PC-9 (cell line): ENCODE measurements at regions of chr1 and their contacts with region 1.

Region 1: GRCh38 chr1:46401964-46402626 is 8.0 kb downstream of the FAAH start:
- DNase-seq: peak; percentile 67 to 88
- H3K4me3 ChIP-seq: no peak overlapping the region
- H3K27ac ChIP-seq: no peak overlapping the region
- H3K4me1 ChIP-seq: peaks cover 8% of the 10 kb centered on the region; the same call in 1 of the 2 replicates
- H3K27me3 ChIP-seq: no peaks in the 10 kb centered on the region
- CTCF ChIP-seq: no peak

Region 2: GRCh38 chr1:46370214-46370633 is 31.9 kb before region 1 on chr1:
- CTCF ChIA-PET with region 1: interaction called, 15 read pairs
- POLR2A ChIA-PET with region 1: no interaction called
- intact Hi-C with region 1: no loop called
- DNase-seq: no peak
- H3K4me3 ChIP-seq: no peak overlapping the region
- H3K27ac ChIP-seq: no peak overlapping the region
- H3K4me1 ChIP-seq: no peaks in the 10 kb centered on the region
- H3K27me3 ChIP-seq: no peaks in the 10 kb centered on the region
- CTCF ChIP-seq: no peak

Region 3: GRCh38 chr1:46456411-46456963 is 54.4 kb after region 1 on chr1:
- CTCF ChIA-PET with region 1: no interaction called
- POLR2A ChIA-PET with region 1: no interaction called
- intact Hi-C with region 1: no loop called
- DNase-seq: no peak
- H3K4me3 ChIP-seq: no peak overlapping the region
- H3K27ac ChIP-seq: no peak overlapping the region
- H3K4me1 ChIP-seq: no peaks in the 10 kb centered on the region
- H3K27me3 ChIP-seq: peaks cover 41% of the 10 kb centered on the region
- CTCF ChIP-seq: no peak

Region 4: GRCh38 chr1:46477153-46477929 is 75.2 kb after region 1 on chr1:
- CTCF ChIA-PET with region 1: no interaction called
- POLR2A ChIA-PET with region 1: interaction called, 4 read pairs
- intact Hi-C with region 1: loop called (anchors 5 kb)
- DNase-seq: peak; percentile 46 to 82
- H3K4me3 ChIP-seq: no peak overlapping the region
- H3K27ac ChIP-seq: no peak overlapping the region
- H3K4me1 ChIP-seq: peaks cover 9% of the 10 kb centered on the region; the same call in 1 of the 2 replicates
- H3K27me3 ChIP-seq: 0 out of 2 replicates have a peak, but pooled peaks cover 5% of the 10 kb centered on the region
- CTCF ChIP-seq: peak; percentile 96

Region 5: GRCh38 chr1:46554597-46555381 is 152.7 kb after region 1 on chr1:
- CTCF ChIA-PET with region 1: no interaction called
- POLR2A ChIA-PET with region 1: interaction called, 24 read pairs
- intact Hi-C with region 1: no loop called
- DNase-seq: peak in 1 of 2 experiments; percentile 4
- H3K4me3 ChIP-seq: no peak overlapping the region
- H3K27ac ChIP-seq: no peak overlapping the region
- H3K4me1 ChIP-seq: 0 out of 2 replicates have a peak, but pooled peaks cover 9% of the 10 kb centered on the region
- H3K27me3 ChIP-seq: peaks cover 13% of the 10 kb centered on the region; the same call in 1 of the 2 replicates
- CTCF ChIP-seq: no peak

Region 6: GRCh38 chr1:46718727-46719622 is 316.9 kb after region 1 on chr1 and contains the start of gene EFCAB14:
- CTCF ChIA-PET with region 1: no interaction called
- POLR2A ChIA-PET with region 1: no interaction called
- intact Hi-C with region 1: loop called (anchors 10 kb)
- DNase-seq: peak; percentile 91 to 100
- H3K4me3 ChIP-seq: peak within 1 kb of the TSS; percentile 82
- H3K27ac ChIP-seq: peak within 1 kb of the TSS; percentile 88
- H3K4me1 ChIP-seq: peaks cover 53% of the 10 kb centered on the region
- H3K27me3 ChIP-seq: no peaks in the 10 kb centered on the region
- CTCF ChIP-seq: no peak
- total RNA-seq, gene EFCAB14: 71.1 and 95.4 TPM in 2 replicates